ENCODE measurements at regions of chr3 and their contacts with region 1.

Region 1: DNA sequence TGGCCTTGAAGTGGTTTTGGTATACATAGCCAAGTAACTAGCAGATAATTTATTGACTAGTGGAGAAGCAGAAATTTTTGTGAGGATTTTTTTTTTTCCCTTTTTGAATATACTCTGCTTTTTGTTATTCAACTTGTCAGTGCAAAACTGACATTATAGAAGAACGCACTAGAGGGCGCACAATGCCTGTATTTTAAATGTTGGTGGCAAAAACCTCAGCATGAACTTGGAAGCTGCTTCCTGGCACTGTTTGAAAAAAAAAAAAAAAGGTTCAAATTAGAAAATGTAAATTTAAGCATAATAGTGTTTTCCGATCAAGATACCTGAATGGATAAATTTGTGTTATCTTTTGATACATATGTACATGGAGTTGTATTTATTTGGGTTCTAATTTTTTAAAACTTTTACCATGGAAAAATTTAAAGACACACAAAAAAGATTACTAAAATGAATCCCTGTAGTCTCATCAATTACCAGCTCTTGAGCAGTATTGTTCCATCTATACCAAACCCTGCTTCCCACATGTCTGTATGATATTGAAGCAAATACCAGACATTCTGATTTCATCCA is 56.0 kb downstream of the SLC25A26 start:
- DNase-seq: peak; percentile 42
- H3K4me3 ChIP-seq: no peak overlapping the region
- H3K27ac ChIP-seq: no peak overlapping the region
- H3K4me1 ChIP-seq: no peaks in the 10 kb centered on the region
- H3K27me3 ChIP-seq: no peaks in the 10 kb centered on the region
- CTCF ChIP-seq: peak; percentile 50 to 66

Region 2: GRCh38 chr3:66372681-66373350 is 96.0 kb after region 1 on chr3:
- CTCF ChIA-PET with region 1: no interaction called
- dilution Hi-C with region 1: no loop called
- in situ Hi-C with region 1: loop called in 1 of 2 experiments (anchors 25 kb)
- intact Hi-C with region 1: loop called (anchors 10 kb)
- DNase-seq: no peak
- H3K4me3 ChIP-seq: no peak overlapping the region
- H3K27ac ChIP-seq: no peak overlapping the region
- H3K4me1 ChIP-seq: no peaks in the 10 kb centered on the region
- H3K27me3 ChIP-seq: no peaks in the 10 kb centered on the region
- CTCF ChIP-seq: no peak

Region 3: DNA sequence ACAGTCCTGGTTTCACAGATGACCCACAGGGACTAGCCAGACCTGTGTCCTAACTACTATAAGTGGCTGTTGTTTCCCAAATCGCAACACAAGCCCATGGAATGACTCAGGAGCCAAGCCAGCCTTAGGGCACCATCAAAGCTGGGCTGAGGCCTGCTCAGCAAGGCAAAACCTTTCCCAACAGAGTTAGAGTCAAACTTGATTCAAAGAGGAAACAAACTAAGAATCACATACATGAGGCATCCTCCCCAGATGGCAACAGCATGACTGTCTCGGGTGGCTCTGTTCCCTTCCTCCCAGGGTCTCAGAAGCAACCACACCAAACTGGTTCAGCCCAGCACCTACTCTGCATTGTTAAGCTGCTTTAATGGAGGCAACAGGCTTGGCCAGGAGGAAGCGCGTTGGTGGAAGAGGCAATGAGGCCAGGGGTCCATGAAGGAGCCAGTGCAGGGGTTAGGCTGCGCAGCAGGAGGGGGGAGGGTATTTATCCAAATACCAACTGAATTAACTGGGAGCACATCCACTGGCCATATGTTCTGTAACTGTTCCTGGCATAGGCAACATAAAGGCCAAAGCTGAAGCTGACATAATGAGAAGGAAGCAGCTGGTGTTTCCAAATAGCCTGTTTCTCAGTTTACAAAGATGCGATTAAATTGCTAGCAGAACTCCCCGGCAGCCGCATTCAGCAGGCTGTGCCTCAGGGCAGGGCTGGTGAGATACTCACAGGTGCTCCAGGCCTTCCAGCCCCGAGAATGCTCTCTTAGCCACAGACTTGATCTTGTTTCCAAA is 121.7 kb after region 1 on chr3:
- CTCF ChIA-PET with region 1: no interaction called
- dilution Hi-C with region 1: no loop called
- in situ Hi-C with region 1: loop called (anchors 5 to 25 kb)
- intact Hi-C with region 1: no loop called
- DNase-seq: peak; percentile 17
- H3K4me3 ChIP-seq: no peak overlapping the region
- H3K27ac ChIP-seq: no peak overlapping the region
- H3K4me1 ChIP-seq: no peaks in the 10 kb centered on the region
- H3K27me3 ChIP-seq: no peaks in the 10 kb centered on the region
- CTCF ChIP-seq: no peak

Region 4: DNA sequence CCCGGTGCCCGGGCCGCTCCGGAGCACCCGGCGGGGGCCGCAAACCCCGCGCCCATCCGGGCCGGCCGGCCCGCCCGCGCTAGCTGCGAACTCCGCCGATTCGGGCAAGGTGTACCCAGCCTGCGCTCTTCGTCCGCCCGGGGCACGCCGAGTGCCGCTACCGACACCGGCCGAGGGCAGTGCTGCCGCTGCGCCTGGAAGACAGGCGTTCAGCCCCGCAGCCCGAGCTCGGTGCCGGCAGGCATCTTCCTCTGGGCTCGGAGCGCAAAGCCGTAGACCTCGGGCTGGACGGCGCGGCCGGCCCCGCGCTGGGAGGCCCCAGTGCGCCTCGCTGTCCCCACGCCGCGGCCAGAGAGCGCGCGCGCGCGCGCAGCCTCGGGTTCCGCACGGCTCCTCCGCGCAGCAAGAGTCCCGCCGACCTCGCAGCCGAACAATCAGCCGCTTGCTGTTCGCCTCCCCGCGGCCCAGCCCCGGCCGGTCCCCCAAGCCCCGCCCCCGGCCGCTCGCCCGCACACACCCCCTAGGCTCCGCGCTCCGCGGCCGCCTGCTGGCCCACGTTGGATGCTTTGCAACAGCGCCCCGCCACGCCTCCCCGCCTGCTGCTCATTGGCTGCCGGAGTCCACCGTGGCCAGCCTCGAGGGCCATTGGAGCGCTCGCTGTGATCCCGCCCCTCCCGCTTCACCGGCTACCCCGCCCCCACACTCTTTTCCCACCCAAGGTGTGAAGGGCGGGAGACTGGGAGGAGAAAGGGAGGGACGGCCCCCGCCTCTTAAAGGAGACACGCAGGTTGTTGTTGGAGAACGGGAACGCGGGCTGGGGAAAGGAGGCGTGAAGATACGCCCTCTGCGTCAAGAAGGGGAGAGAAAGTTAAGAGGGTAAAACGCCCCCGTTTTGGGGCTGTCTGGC is 224.0 kb after region 1 on chr3 and contains the start of gene LRIG1:
- CTCF ChIA-PET with region 1: no interaction called
- dilution Hi-C with region 1: no loop called
- in situ Hi-C with region 1: no loop called
- intact Hi-C with region 1: loop called (anchors 5 kb)
- DNase-seq: peak; percentile 97
- H3K4me3 ChIP-seq: peak within 1 kb of the TSS; percentile 52 to 95 (median 88)
- H3K27ac ChIP-seq: no peak within 1 kb of the TSS
- H3K4me1 ChIP-seq: peaks cover 2% of the 10 kb centered on the region
- H3K27me3 ChIP-seq: no peaks in the 10 kb centered on the region
- CTCF ChIP-seq: peak in 1 of 2 donors; percentile 38
- total RNA-seq, gene LRIG1: 11.7 to 15.3 TPM

Region 5: DNA sequence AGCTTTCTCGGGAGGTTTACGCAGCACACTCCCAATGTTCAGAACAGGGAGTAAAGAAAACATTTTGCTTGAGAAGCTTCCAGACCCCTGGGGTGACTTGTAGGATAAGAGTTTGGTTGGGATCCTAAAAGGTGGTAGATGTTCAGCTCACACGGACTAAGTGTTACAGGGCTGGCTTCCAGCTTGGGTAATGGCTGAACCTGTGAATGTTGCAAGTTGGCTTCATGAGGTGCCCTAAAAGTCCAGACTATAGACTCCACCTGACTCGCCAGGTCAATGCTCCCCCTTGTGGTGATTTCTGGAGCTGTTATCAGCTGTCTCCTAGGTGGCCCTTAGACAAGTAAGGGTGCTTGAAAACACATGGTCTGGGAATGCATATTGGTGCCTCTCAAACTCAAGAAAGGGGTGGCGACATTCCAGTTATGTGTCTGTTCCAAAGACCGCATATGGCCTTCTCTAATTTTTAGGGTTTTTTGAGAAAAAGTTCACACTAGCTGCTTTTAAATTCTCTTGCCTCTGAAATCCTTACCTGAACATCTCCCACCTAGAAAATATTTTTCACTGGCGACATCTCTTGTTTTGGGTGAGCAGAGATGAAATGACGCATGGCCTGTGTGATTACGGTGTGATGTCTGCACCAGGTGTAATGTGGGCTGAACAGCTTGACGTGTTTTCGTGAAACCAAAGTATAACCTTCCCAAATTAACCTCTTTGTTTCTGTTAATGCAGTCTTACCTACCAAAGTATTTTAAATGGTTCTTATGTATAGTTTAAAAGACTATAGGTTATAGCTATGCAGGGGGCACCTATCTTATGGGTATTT is 545.6 kb after region 1 on chr3:
- CTCF ChIA-PET with region 1: interaction called, 6 read pairs
- dilution Hi-C with region 1: no loop called
- in situ Hi-C with region 1: loop called (anchors 5 kb)
- intact Hi-C with region 1: loop called (anchors 1 kb)
- DNase-seq: peak; percentile 55
- H3K4me3 ChIP-seq: no peak overlapping the region
- H3K27ac ChIP-seq: no peak overlapping the region
- H3K4me1 ChIP-seq: no peaks in the 10 kb centered on the region
- H3K27me3 ChIP-seq: peaks cover 2% of the 10 kb centered on the region
- CTCF ChIP-seq: peak; percentile 74 to 86

Measured in mammary epithelial cell (primary cell).